GM12878 (cell line): ENCODE measurements at regions of chr7 and their contacts with region 1.

Region 1: GRCh38 chr7:97835296-97836138 is 36.7 kb downstream of the ASNS start:
- DNase-seq: peak; percentile 9
- ATAC-seq: peak; percentile 97
- H3K4me3 ChIP-seq: no peak overlapping the region
- H3K27ac ChIP-seq: no peak overlapping the region
- H3K4me1 ChIP-seq: no peaks in the 10 kb centered on the region
- H3K27me3 ChIP-seq: no peaks in the 10 kb centered on the region
- CTCF ChIP-seq: peak; percentile 29 to 68 (median 63); a peak in 5 of 6 replicates
- EP300 ChIP-seq: no peak
- POLR2A ChIP-seq: no peak
- RAD21 ChIP-seq: peak; percentile 80

Region 2: GRCh38 chr7:97145068-97145467 is 690.4 kb before region 1 on chr7:
- CTCF ChIA-PET with region 1: interaction called, 14 read pairs
- POLR2A ChIA-PET with region 1: no interaction called
- RAD21 ChIA-PET with region 1: interaction called, 4 read pairs
- SMC1A ChIA-PET with region 1: interaction called, 6 read pairs
- in situ Hi-C with region 1: no loop called
- intact Hi-C with region 1: loop called (anchors 1 kb)
- DNase-seq: no peak
- ATAC-seq: peak; percentile 47; the same call in 2 of the 3 replicates
- H3K4me3 ChIP-seq: no peak overlapping the region
- H3K27ac ChIP-seq: no peak overlapping the region
- H3K4me1 ChIP-seq: no peaks in the 10 kb centered on the region
- H3K27me3 ChIP-seq: no peaks in the 10 kb centered on the region
- CTCF ChIP-seq: peak in 2 of 3 experiments; percentile 19 to 34; a peak in 3 of 6 replicates
- EP300 ChIP-seq: no peak
- POLR2A ChIP-seq: no peak
- RAD21 ChIP-seq: peak; percentile 67

Region 3: GRCh38 chr7:97499204-97499603 is 336.3 kb before region 1 on chr7:
- CTCF ChIA-PET with region 1: interaction called, 35 read pairs
- POLR2A ChIA-PET with region 1: no interaction called
- RAD21 ChIA-PET with region 1: interaction called, 7 read pairs
- SMC1A ChIA-PET with region 1: interaction called, 10 read pairs
- in situ Hi-C with region 1: loop called (anchors 5 kb)
- intact Hi-C with region 1: loop called (anchors 1 kb)
- DNase-seq: no peak
- ATAC-seq: peak; percentile 86
- H3K4me3 ChIP-seq: no peak overlapping the region
- H3K27ac ChIP-seq: no peak overlapping the region
- H3K4me1 ChIP-seq: no peaks in the 10 kb centered on the region
- H3K27me3 ChIP-seq: no peaks in the 10 kb centered on the region
- CTCF ChIP-seq: peak; percentile 61 to 76 (median 61); a peak in 5 of 6 replicates
- EP300 ChIP-seq: no peak
- POLR2A ChIP-seq: no peak
- RAD21 ChIP-seq: peak; percentile 62

Region 4: GRCh38 chr7:97506728-97507127 is 328.8 kb before region 1 on chr7:
- CTCF ChIA-PET with region 1: interaction called, 3 read pairs
- POLR2A ChIA-PET with region 1: no interaction called
- RAD21 ChIA-PET with region 1: no interaction called
- SMC1A ChIA-PET with region 1: no interaction called
- in situ Hi-C with region 1: loop called (anchors 5 kb)
- intact Hi-C with region 1: no loop called
- DNase-seq: peak; percentile 20
- ATAC-seq: peak; percentile 93
- H3K4me3 ChIP-seq: peak overlapping the region; percentile 19; the same call in 1 of the 2 replicates
- H3K27ac ChIP-seq: no peak overlapping the region
- H3K4me1 ChIP-seq: no peaks in the 10 kb centered on the region
- H3K27me3 ChIP-seq: no peaks in the 10 kb centered on the region
- CTCF ChIP-seq: no peak
- EP300 ChIP-seq: no peak
- POLR2A ChIP-seq: no peak
- RAD21 ChIP-seq: no peak

Region 5: GRCh38 chr7:97819161-97819560 is 16.4 kb before region 1 on chr7:
- CTCF ChIA-PET with region 1: interaction called, 18 read pairs
- POLR2A ChIA-PET with region 1: no interaction called
- RAD21 ChIA-PET with region 1: interaction called, 3 read pairs
- SMC1A ChIA-PET with region 1: interaction called, 3 read pairs
- in situ Hi-C with region 1: no loop called
- intact Hi-C with region 1: no loop called
- DNase-seq: no peak
- ATAC-seq: no peak; the same call in 2 of the 3 replicates
- H3K4me3 ChIP-seq: no peak overlapping the region
- H3K27ac ChIP-seq: no peak overlapping the region
- H3K4me1 ChIP-seq: no peaks in the 10 kb centered on the region
- H3K27me3 ChIP-seq: no peaks in the 10 kb centered on the region
- CTCF ChIP-seq: 0 out of 6 replicates have a peak, but pooled peaks of 1 of the 3 experiments have one; percentile 3
- EP300 ChIP-seq: no peak
- POLR2A ChIP-seq: no peak
- RAD21 ChIP-seq: peak; percentile 32; the same call in 1 of the 2 replicates

Region 6: DNA sequence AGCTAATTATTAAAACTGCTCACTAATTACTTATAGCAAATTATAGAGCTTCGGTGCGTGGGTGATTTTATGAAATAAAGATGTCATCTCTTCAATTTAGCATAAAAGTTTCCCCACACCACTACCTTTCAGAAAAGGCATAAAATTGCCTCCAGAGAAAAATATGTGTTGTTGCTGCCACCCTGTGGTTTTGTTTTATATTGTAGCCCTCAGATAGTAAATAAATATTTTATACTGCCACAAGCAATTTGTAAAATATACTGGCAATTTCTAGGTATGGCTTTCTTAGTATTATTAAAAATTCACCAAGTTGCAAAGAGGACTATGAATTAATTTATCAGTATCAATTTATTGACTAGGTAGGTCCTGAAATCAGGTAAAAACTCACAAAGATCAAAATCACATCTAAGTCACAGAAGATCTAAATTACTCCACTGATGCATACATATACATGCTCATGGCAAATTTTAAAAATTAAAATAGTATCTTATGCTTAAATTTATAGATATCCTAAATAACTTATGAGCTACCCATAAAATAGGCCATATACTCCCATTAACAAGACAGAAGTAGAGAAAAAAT is 10.2 kb after region 1 on chr7:
- CTCF ChIA-PET with region 1: interaction called, 15 read pairs
- POLR2A ChIA-PET with region 1: no interaction called
- RAD21 ChIA-PET with region 1: no interaction called
- SMC1A ChIA-PET with region 1: interaction called, 10 read pairs
- in situ Hi-C with region 1: no loop called
- intact Hi-C with region 1: no loop called
- DNase-seq: no peak
- ATAC-seq: peak; percentile 67
- H3K4me3 ChIP-seq: no peak overlapping the region
- H3K27ac ChIP-seq: no peak overlapping the region
- H3K4me1 ChIP-seq: no peaks in the 10 kb centered on the region
- H3K27me3 ChIP-seq: no peaks in the 10 kb centered on the region
- CTCF ChIP-seq: peak; percentile 16 to 43 (median 20); a peak in 2 of 6 replicates
- EP300 ChIP-seq: no peak
- POLR2A ChIP-seq: no peak
- RAD21 ChIP-seq: peak; percentile 51